Sigmoid colon (tissue), 7 donors: ENCODE measurements at regions of chr11 and their contacts with region 1.

Region 1: GRCh38 chr11:8858808-8859207 is 52.2 kb upstream of the AKIP1 start:
- DNase-seq: no peak
- H3K4me3 ChIP-seq: no peak overlapping the region
- H3K27ac ChIP-seq: peak overlapping the region in 1 of 4 donors; percentile 56
- H3K4me1 ChIP-seq: peaks cover 0 to 20% (median 9%) of the 10 kb centered on the region in 4 donors
- H3K27me3 ChIP-seq: no peaks in the 10 kb centered on the region
- CTCF ChIP-seq: no peak
- EP300 ChIP-seq: no peak
- POLR2A ChIP-seq: no peak

Region 2: GRCh38 chr11:8732748-8733241 is 126.0 kb before region 1 on chr11:
- intact Hi-C with region 1: no loop called
- DNase-seq: peak; percentile 89
- H3K4me3 ChIP-seq: no peak overlapping the region
- H3K27ac ChIP-seq: peak overlapping the region; percentile 90 to 98 (median 96)
- H3K4me1 ChIP-seq: peaks cover 0 to 74% (median 67%) of the 10 kb centered on the region in 4 donors
- H3K27me3 ChIP-seq: no peaks in the 10 kb centered on the region
- CTCF ChIP-seq: no peak
- EP300 ChIP-seq: peak in 1 of 4 donors; percentile 56
- POLR2A ChIP-seq: no peak

Region 3: DNA sequence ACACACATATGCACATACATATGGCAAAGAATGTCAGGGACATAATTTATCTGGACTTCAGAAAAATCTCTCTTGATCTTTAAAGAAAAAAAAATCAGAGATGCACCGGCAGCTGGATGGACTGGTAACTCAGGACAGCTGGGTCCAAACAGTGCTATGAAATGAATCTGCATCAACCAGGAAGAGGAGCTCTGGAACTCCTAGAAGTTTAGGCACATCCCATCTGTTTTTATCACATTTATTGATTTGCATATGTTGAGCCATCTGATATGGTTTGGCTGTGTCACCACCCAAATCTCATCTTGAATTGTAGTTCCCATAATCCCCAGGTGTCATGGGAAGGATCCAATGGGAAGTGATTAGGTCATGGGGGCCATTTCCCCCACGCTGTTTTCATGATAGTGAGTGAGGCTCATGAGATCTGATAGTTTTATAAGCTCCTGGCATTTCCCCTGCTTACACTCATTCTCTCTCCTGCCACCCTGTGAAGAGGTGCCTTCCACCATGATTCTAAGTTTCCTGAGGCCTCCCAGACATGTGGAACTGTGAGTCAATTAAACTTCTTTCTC is 35.5 kb before region 1 on chr11:
- intact Hi-C with region 1: loop called (anchors 5 kb)
- DNase-seq: peak; percentile 19
- H3K4me3 ChIP-seq: no peak overlapping the region
- H3K27ac ChIP-seq: no peak overlapping the region
- H3K4me1 ChIP-seq: peaks cover 0 to 6% (median 0%) of the 10 kb centered on the region in 4 donors
- H3K27me3 ChIP-seq: no peaks in the 10 kb centered on the region
- CTCF ChIP-seq: no peak
- EP300 ChIP-seq: no peak
- POLR2A ChIP-seq: no peak